ENCODE measurements at regions of chr4 and their contacts with region 1.

Region 1: GRCh38 chr4:169024762-169025161 is 14.7 kb upstream of the CBR4 start:
- DNase-seq: no peak
- H3K4me3 Mint-ChIP-seq: no peak overlapping the region
- H3K27ac Mint-ChIP-seq: no peak overlapping the region
- H3K4me1 Mint-ChIP-seq: no peaks in the 10 kb centered on the region
- H3K27me3 Mint-ChIP-seq: no peaks in the 10 kb centered on the region

Region 2: DNA sequence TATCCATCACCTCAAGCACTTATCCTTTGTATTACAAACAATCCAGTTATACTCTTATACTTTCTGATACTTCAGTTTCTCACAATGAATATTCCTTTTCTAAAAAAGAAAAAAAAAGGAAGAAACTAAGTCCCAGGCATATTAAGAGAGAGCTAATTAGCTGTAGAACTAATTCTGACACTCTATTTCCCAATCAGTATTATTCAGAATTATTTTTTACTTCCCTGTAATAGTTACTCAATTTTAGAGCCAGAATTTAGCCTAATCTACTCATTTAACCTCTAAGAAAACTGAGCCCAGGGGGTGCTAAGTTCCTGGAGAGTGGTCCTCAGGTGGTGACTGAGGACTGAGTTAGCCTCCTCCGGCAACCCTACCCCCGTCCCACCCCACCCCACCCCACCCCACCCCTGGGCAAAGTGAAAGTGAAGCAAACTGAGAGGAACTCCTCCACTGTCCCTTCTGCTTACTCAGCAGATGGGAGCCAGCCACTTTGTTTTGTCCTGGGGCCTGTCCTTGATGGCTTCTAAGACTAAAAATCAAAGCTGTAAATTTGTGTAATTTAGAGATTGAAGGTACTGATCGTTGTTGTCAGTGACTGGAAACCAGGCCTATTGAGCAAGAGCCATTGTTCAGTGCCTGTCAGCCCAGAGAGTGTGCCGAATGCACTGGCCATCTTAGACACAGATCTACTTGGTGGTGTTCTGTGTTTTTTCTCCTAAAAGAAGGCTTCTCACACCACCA is 176.8 kb before region 1 on chr4:
- intact Hi-C with region 1: no loop called
- DNase-seq: no peak
- H3K4me3 Mint-ChIP-seq: peak overlapping the region; percentile 27
- H3K27ac Mint-ChIP-seq: no peak overlapping the region
- H3K4me1 Mint-ChIP-seq: peaks cover 17% of the 10 kb centered on the region
- H3K27me3 Mint-ChIP-seq: no peaks in the 10 kb centered on the region

Region 3: DNA sequence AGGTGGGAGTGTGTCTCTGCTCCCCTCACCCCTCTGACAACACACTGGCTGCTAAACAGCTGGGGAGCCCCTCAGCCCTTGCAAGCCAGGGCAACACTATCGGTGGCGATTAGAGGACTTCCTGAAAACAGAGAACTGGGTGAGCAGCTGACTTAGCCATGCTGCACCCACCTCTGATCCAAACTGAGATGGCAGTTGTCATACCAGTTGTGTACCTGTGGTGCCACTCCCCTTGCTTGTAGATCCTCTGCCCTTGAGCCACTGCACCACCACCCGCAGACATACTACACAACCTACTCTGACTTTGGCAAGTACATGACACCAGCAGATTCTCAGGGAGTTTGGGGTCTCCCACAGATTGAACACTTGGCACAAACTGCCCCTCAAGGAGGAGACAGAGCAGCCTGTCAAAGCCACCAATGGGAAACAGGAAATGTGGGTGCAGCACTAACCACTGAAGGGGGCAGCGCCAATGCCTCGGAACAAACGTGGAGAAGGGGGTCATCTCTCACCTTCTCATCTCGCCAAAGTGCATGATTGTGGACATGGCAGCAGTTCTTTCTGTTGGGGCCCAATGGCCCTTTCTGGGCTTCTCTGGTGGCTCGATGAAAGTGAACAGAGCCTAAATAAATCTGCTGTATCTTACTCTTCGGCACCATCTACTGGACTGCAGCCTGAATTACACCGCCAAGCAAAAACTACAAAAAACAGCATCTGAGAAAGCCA is 467.8 kb after region 1 on chr4:
- intact Hi-C with region 1: loop called (anchors 2 kb)
- DNase-seq: peak; percentile 17
- H3K4me3 Mint-ChIP-seq: no peak overlapping the region
- H3K27ac Mint-ChIP-seq: no peak overlapping the region
- H3K4me1 Mint-ChIP-seq: no peaks in the 10 kb centered on the region
- H3K27me3 Mint-ChIP-seq: no peaks in the 10 kb centered on the region

Measured in activated T-helper 1 cell treated with anti-CD3 and anti-CD28 coated beads, Interleukin-12 subunit alpha, Interleukin-12 subunit beta, Interleukin-2, Interleukin-4 antibody, amounts not matched to agents 30 ng/mL and 10 ng/mL and 1 ng/mL, durations not matched to agents 14 hours and 24 hours and 36 hours (primary cell).